B cell (primary cell): ENCODE measurements at regions of chr13 and their contacts with region 1.

Region 1: GRCh38 chr13:99656092-99656745 is 154.9 kb downstream of the TM9SF2 start:
- DNase-seq: peak; percentile 77
- ATAC-seq: peak; percentile 75
- H3K4me3 ChIP-seq: no peak overlapping the region
- H3K4me3 Mint-ChIP-seq: peak overlapping the region; percentile 30
- H3K27ac ChIP-seq: no peak overlapping the region
- H3K27ac Mint-ChIP-seq: no peak overlapping the region
- H3K4me1 ChIP-seq: peaks cover 14 to 18% of the 10 kb centered on the region in 2 donors
- H3K4me1 Mint-ChIP-seq: peaks cover 23% of the 10 kb centered on the region
- H3K27me3 ChIP-seq: peaks cover 0 to 13% (median 10%) of the 10 kb centered on the region in 4 experiments
- H3K27me3 Mint-ChIP-seq: peaks cover 5% of the 10 kb centered on the region
- CTCF ChIP-seq: peak; percentile 90

Region 2: DNA sequence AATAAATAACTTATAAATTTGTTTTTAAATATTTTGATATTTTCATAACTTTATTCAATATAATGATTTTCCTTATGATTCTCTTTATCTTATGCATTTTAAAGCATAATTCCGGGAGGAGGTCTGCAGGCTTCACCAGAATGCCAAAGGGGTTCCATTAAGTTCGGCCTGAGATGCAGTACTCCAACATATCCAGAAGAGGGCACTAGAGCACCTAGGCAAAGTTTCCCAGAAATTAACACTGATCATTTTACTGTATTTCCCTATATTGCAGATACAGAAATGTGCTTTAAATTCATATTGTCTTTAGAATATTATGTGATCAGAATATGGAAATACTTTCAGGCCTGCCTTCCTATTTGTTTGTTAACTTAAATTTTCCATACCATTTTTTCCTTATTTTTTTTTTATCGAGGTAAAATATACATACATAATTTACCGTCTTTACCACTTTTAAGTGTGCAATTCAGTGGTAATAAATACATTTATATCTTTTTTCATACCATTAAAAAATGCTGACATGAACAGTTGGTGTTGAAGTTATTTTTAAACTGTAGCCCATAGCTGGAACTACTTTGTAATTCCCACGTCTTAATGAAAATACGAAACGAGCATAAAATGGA is 213.8 kb before region 1 on chr13:
- CTCF ChIA-PET with region 1: interaction called, 4 read pairs
- POLR2A ChIA-PET with region 1: no interaction called
- intact Hi-C with region 1: loop called (anchors 2 kb)
- DNase-seq: peak; percentile 76
- ATAC-seq: peak; percentile 80
- H3K4me3 ChIP-seq: no peak overlapping the region
- H3K4me3 Mint-ChIP-seq: no peak overlapping the region
- H3K27ac ChIP-seq: no peak overlapping the region
- H3K27ac Mint-ChIP-seq: no peak overlapping the region
- H3K4me1 ChIP-seq: peaks cover 14 to 17% of the 10 kb centered on the region in 2 donors
- H3K4me1 Mint-ChIP-seq: peaks cover 15% of the 10 kb centered on the region
- H3K27me3 ChIP-seq: no peaks in the 10 kb centered on the region
- H3K27me3 Mint-ChIP-seq: no peaks in the 10 kb centered on the region
- CTCF ChIP-seq: peak; percentile 99

Region 3: GRCh38 chr13:99731747-99732146 is 75.5 kb after region 1 on chr13:
- CTCF ChIA-PET with region 1: no interaction called
- POLR2A ChIA-PET with region 1: no interaction called
- intact Hi-C with region 1: no loop called
- DNase-seq: no peak
- ATAC-seq: no peak
- H3K4me3 ChIP-seq: no peak overlapping the region
- H3K4me3 Mint-ChIP-seq: no peak overlapping the region
- H3K27ac ChIP-seq: no peak overlapping the region
- H3K27ac Mint-ChIP-seq: no peak overlapping the region
- H3K4me1 ChIP-seq: no peaks in the 10 kb centered on the region
- H3K4me1 Mint-ChIP-seq: peaks cover 9% of the 10 kb centered on the region
- H3K27me3 ChIP-seq: no peaks in the 10 kb centered on the region
- H3K27me3 Mint-ChIP-seq: no peaks in the 10 kb centered on the region
- CTCF ChIP-seq: no peak

Region 4: GRCh38 chr13:99855526-99856420 is 199.6 kb after region 1 on chr13:
- CTCF ChIA-PET with region 1: no interaction called
- POLR2A ChIA-PET with region 1: no interaction called
- intact Hi-C with region 1: no loop called
- DNase-seq: no peak
- ATAC-seq: no peak
- H3K4me3 ChIP-seq: no peak overlapping the region
- H3K4me3 Mint-ChIP-seq: no peak overlapping the region
- H3K27ac ChIP-seq: no peak overlapping the region
- H3K27ac Mint-ChIP-seq: no peak overlapping the region
- H3K4me1 ChIP-seq: no peaks in the 10 kb centered on the region
- H3K4me1 Mint-ChIP-seq: no peaks in the 10 kb centered on the region
- H3K27me3 ChIP-seq: no peaks in the 10 kb centered on the region
- H3K27me3 Mint-ChIP-seq: no peaks in the 10 kb centered on the region
- CTCF ChIP-seq: no peak

Region 5: DNA sequence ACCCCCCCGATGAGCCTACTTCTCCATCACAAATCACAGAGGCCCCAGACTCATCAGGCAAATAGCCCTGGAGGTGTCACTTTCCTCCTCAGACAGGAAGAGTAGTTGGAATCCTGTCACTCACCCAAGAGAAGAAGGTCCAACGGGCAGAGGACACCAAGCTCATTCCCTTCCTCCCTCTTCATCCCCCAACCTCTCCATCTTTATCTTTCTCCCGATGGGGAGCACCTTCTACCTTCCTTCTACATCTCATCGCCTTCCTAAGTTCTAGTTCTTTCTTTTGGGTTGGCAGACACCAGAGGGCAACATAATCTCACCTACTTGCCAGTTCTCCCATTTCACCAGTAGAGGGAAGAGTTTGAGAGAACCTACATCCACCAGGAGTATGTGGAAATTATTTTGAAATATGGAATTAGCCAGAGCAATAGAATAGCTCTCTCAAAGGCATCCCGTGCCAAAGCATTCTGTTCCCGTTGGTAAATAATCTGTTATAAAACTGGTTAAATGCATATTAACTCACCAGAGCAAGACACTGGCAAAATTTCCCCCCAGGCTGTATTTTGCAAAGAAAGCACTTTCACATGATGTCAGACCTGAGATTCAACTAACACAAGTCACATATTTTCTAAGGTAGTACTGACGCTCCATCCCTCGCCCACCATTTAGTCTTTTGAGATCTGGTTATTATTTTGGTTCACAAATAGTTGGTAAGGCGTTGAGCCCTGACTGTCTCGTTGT is 260.3 kb after region 1 on chr13:
- CTCF ChIA-PET with region 1: interaction called, 8 read pairs
- POLR2A ChIA-PET with region 1: no interaction called
- intact Hi-C with region 1: loop called (anchors 1 kb)
- DNase-seq: peak; percentile 57
- ATAC-seq: peak; percentile 58
- H3K4me3 ChIP-seq: no peak overlapping the region
- H3K4me3 Mint-ChIP-seq: no peak overlapping the region
- H3K27ac ChIP-seq: no peak overlapping the region
- H3K27ac Mint-ChIP-seq: no peak overlapping the region
- H3K4me1 ChIP-seq: no peaks in the 10 kb centered on the region
- H3K4me1 Mint-ChIP-seq: no peaks in the 10 kb centered on the region
- H3K27me3 ChIP-seq: peaks cover 0 to 18% (median 9%) of the 10 kb centered on the region in 4 experiments
- H3K27me3 Mint-ChIP-seq: peaks cover 14% of the 10 kb centered on the region
- CTCF ChIP-seq: peak; percentile 78

Region 6: DNA sequence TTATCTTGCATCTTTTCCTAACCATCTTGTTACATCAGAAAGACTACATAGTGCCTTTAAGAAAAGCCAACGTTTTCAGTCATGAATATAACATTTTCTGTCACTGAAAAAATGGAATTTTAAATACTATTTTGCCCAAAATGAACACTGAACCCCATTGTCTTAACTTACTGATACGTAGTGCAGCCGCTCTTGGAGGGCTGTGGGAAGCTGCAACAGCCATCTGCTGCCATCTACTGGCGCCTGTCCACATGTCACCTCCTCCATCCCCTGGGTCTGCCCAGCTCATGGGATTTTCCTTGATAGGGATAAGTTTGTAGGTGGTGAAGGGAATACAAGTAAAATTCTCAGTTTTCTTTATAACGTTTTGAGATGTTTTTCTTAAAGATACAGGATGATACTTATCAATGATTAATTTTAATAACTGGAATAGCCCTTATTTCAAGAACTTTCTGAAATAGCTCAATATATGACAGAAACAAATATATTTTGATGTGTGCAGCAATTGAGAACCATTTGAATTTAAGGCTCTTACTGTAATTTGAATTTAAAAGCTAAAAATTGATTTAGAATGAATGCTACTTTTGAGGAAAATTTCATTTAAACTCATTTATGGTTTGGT is 858.7 kb after region 1 on chr13:
- CTCF ChIA-PET with region 1: interaction called, 105 read pairs
- POLR2A ChIA-PET with region 1: no interaction called
- intact Hi-C with region 1: loop called (anchors 1 kb)
- DNase-seq: peak; percentile 74
- ATAC-seq: peak; percentile 84
- H3K4me3 ChIP-seq: no peak overlapping the region
- H3K4me3 Mint-ChIP-seq: no peak overlapping the region
- H3K27ac ChIP-seq: no peak overlapping the region
- H3K27ac Mint-ChIP-seq: no peak overlapping the region
- H3K4me1 ChIP-seq: no peaks in the 10 kb centered on the region
- H3K4me1 Mint-ChIP-seq: peaks cover 3% of the 10 kb centered on the region
- H3K27me3 ChIP-seq: no peaks in the 10 kb centered on the region
- H3K27me3 Mint-ChIP-seq: no peaks in the 10 kb centered on the region
- CTCF ChIP-seq: peak; percentile 95

Region 7: GRCh38 chr13:101098873-101099272 is 1442.7 kb after region 1 on chr13:
- CTCF ChIA-PET with region 1: no interaction called
- POLR2A ChIA-PET with region 1: no interaction called
- intact Hi-C with region 1: loop called (anchors 5 kb)
- DNase-seq: no peak
- ATAC-seq: no peak
- H3K4me3 ChIP-seq: no peak overlapping the region
- H3K4me3 Mint-ChIP-seq: no peak overlapping the region
- H3K27ac ChIP-seq: no peak overlapping the region
- H3K27ac Mint-ChIP-seq: no peak overlapping the region
- H3K4me1 ChIP-seq: no peaks in the 10 kb centered on the region
- H3K4me1 Mint-ChIP-seq: no peaks in the 10 kb centered on the region
- H3K27me3 ChIP-seq: peaks cover 0 to 3% (median 0%) of the 10 kb centered on the region in 4 experiments
- H3K27me3 Mint-ChIP-seq: peaks cover 6% of the 10 kb centered on the region
- CTCF ChIP-seq: no peak